KBM-7 (cell line): ENCODE measurements at regions of chr1 and their contacts with region 1.

Region 1: GRCh38 chr1:117209094-117209493 is 1.6 kb downstream of the VTCN1 start:
- DNase-seq: no peak

Region 2: DNA sequence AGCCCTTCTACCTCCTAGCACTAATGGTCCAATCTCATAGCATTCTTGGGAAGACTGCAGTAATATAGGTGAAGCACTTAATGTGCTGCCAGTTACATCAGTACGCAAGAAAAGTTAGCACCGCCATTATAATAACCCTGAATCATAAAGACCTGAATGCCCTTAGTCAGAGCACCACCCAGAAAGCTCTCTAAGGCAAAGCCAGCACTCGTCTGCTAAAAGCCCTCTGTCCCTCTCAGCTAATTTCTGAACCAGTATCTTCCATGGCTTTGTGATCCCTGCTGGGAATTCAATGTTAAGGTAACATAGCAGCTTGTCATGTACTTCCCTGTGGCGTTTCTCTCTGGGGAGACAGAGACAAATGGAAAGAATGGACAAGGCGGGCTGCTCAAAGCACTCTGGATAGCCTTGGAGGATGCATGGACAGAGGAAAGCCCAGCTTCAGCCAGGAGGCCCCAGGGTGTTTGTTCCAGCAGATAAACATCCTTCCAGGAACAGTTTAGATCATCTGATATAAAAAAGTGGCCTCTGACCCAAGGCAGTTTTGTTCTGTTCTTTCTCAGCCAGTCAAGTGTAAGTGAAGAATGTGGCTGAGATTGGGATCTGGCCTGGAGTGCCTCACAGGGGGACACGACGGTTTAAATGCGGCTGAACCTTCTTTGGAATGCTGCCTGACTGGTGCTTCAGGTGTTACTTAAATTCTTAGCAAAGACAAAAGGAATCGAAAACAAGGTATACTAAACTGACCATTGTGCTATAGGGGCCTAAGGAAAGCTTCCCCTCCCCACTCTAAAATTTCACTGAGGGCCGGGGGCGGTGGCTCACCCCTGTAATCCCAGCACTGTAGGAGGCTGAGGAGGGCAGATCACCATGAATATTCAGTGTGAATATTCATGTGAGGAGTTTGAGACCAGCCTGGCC is 59.7 kb after region 1 on chr1:
- in situ Hi-C with region 1: loop called (anchors 10 kb)
- DNase-seq: no peak